ENCODE measurements at regions of chr11 and their contacts with region 1.

Region 1: GRCh38 chr11:70467201-70468085 is 69.1 kb downstream of the CTTN start:
- DNase-seq: peak; percentile 68
- H3K4me3 Mint-ChIP-seq: no peak overlapping the region
- H3K27ac Mint-ChIP-seq: no peak overlapping the region
- H3K4me1 Mint-ChIP-seq: no peaks in the 10 kb centered on the region
- H3K27me3 Mint-ChIP-seq: peaks cover 19% of the 10 kb centered on the region

Region 2: DNA sequence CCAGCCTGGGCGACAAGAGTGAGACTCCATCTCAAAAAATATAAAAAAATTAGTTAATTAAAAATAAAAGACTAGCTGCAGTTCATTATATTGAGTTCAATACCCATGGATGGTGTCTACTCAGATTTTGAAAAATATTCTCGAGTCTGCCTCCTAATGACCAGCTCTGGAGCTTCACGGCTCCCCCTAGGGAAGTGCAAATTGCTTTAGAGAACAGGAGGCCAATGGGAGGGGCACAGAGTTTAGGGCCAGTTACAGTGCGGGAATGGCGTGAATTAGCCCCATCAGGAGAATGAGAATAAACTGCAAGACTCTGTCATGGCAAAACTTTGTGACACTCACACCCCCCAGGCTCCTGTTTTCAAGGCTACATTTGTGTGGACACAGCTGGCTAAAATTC is 696.9 kb before region 1 on chr11:
- CTCF ChIA-PET with region 1: no interaction called
- DNase-seq: no peak
- H3K4me3 Mint-ChIP-seq: no peak overlapping the region
- H3K27ac Mint-ChIP-seq: no peak overlapping the region
- H3K4me1 Mint-ChIP-seq: no peaks in the 10 kb centered on the region
- H3K27me3 Mint-ChIP-seq: peaks cover 54% of the 10 kb centered on the region

Region 3: GRCh38 chr11:70501051-70501901 is 33.8 kb after region 1 on chr11:
- CTCF ChIA-PET with region 1: no interaction called
- DNase-seq: no peak
- H3K4me3 Mint-ChIP-seq: no peak overlapping the region
- H3K27ac Mint-ChIP-seq: no peak overlapping the region
- H3K4me1 Mint-ChIP-seq: no peaks in the 10 kb centered on the region
- H3K27me3 Mint-ChIP-seq: no peaks in the 10 kb centered on the region

Region 4: GRCh38 chr11:70755410-70756161 is 288.1 kb after region 1 on chr11:
- CTCF ChIA-PET with region 1: interaction called, 25 read pairs
- DNase-seq: peak; percentile 74
- H3K4me3 Mint-ChIP-seq: no peak overlapping the region
- H3K27ac Mint-ChIP-seq: no peak overlapping the region
- H3K4me1 Mint-ChIP-seq: no peaks in the 10 kb centered on the region
- H3K27me3 Mint-ChIP-seq: peaks cover 11% of the 10 kb centered on the region